Breast epithelium (tissue), 4 donors: ENCODE measurements at regions of chr4 and their contacts with region 1.

Region 1: GRCh38 chr4:24226023-24226422 is 336.2 kb upstream of the PPARGC1A start:
- DNase-seq: no peak
- H3K4me3 ChIP-seq: peak overlapping the region in 1 of 3 donors; percentile 40
- H3K27ac ChIP-seq: no peak overlapping the region
- H3K4me1 ChIP-seq: no peaks in the 10 kb centered on the region
- H3K27me3 ChIP-seq: no peaks in the 10 kb centered on the region
- CTCF ChIP-seq: no peak
- POLR2A ChIP-seq: no peak

Region 2: GRCh38 chr4:24243641-24244040 is 17.6 kb after region 1 on chr4:
- intact Hi-C with region 1: loop called (anchors 1 kb)
- DNase-seq: no peak
- H3K4me3 ChIP-seq: no peak overlapping the region
- H3K27ac ChIP-seq: no peak overlapping the region
- H3K4me1 ChIP-seq: no peaks in the 10 kb centered on the region
- H3K27me3 ChIP-seq: no peaks in the 10 kb centered on the region
- CTCF ChIP-seq: no peak
- POLR2A ChIP-seq: no peak

Region 3: GRCh38 chr4:24312261-24312913 is 86.4 kb after region 1 on chr4:
- intact Hi-C with region 1: loop called (anchors 5 kb)
- DNase-seq: no peak
- H3K4me3 ChIP-seq: no peak overlapping the region
- H3K27ac ChIP-seq: no peak overlapping the region
- H3K4me1 ChIP-seq: no peaks in the 10 kb centered on the region
- H3K27me3 ChIP-seq: no peaks in the 10 kb centered on the region
- CTCF ChIP-seq: no peak
- POLR2A ChIP-seq: no peak